A549 (cell line): ENCODE measurements at regions of chr16 and their contacts with region 1.

Region 1: GRCh38 chr16:87062569-87063442 is 254.4 kb downstream of the C16orf95 start:
- DNase-seq: peak; percentile 70 to 91
- ATAC-seq: peak; percentile 92 to 98
- H3K4me3 ChIP-seq: peak overlapping the region; percentile 30; the same call in 2 of the 3 replicates
- H3K27ac ChIP-seq: peak overlapping the region; percentile 58 to 69; a peak in 4 of 6 replicates
- H3K4me1 ChIP-seq: peaks cover 4% of the 10 kb centered on the region; the same call in 1 of the 3 replicates
- CTCF ChIP-seq: peak; percentile 84
- EP300 ChIP-seq: no peak
- POLR2A ChIP-seq: no peak
- RAD21 ChIP-seq: peak; percentile 92 to 98

Region 2: DNA sequence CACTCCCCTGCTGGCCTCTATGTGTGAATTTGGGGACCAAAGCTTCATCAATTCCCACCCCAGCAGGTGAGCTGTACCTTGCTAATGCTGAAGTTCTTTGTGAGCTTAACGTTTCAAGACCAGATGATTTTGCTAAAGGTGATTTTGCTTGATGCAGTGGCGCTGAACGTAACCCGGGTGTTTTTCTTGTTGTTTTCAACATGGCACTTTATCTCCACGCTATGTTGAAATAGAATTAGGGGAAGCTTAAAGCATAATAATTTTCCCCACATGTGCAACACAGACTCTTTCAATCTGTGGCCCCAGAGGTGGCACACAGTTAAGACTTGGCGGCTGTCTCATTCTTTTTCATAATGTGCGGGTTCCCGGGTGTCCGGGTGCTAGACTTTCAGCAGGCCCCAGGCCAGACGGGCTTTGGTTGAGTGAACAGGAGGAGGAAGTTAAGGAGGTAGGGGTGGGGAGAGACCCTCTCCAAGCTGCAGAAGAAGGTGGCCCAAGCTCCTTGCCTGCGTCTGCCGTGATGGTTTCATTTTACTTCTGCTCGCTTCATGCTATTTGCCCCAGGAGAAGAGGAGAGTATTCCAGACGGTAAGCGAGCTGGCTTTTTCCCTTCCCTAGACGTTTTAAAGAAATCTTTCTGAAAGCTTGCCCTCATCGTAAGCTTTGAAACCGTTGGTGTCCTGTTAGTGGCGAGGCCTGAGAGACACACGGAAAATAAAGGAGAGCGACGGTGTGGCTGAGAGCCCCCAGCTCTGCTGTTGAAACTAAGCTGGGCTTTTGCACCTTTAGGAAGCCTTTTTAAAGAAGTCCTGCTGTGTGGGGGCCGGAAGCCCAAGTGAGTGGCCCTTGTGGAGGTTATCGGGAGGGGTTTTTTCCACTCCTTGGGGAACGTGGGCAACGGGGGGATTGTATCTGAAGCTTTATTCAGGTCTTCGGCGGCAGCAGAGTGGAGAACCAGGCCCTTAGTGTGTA is 492.0 kb before region 1 on chr16:
- CTCF ChIA-PET with region 1: interaction called, 22 read pairs
- POLR2A ChIA-PET with region 1: no interaction called
- DNase-seq: no peak
- ATAC-seq: no peak
- H3K4me3 ChIP-seq: no peak overlapping the region
- H3K27ac ChIP-seq: no peak overlapping the region
- H3K4me1 ChIP-seq: no peaks in the 10 kb centered on the region
- CTCF ChIP-seq: no peak
- EP300 ChIP-seq: no peak
- POLR2A ChIP-seq: no peak
- RAD21 ChIP-seq: no peak

Region 3: GRCh38 chr16:86824751-86825296 is 238.0 kb before region 1 on chr16:
- CTCF ChIA-PET with region 1: interaction called, 14 read pairs
- POLR2A ChIA-PET with region 1: no interaction called
- DNase-seq: no peak
- ATAC-seq: no peak
- H3K4me3 ChIP-seq: no peak overlapping the region
- H3K27ac ChIP-seq: peak overlapping the region in 1 of 2 experiments; percentile 30; a peak in 1 of 6 replicates
- H3K4me1 ChIP-seq: no peaks in the 10 kb centered on the region
- CTCF ChIP-seq: no peak
- EP300 ChIP-seq: no peak
- POLR2A ChIP-seq: no peak
- RAD21 ChIP-seq: no peak

Region 4: DNA sequence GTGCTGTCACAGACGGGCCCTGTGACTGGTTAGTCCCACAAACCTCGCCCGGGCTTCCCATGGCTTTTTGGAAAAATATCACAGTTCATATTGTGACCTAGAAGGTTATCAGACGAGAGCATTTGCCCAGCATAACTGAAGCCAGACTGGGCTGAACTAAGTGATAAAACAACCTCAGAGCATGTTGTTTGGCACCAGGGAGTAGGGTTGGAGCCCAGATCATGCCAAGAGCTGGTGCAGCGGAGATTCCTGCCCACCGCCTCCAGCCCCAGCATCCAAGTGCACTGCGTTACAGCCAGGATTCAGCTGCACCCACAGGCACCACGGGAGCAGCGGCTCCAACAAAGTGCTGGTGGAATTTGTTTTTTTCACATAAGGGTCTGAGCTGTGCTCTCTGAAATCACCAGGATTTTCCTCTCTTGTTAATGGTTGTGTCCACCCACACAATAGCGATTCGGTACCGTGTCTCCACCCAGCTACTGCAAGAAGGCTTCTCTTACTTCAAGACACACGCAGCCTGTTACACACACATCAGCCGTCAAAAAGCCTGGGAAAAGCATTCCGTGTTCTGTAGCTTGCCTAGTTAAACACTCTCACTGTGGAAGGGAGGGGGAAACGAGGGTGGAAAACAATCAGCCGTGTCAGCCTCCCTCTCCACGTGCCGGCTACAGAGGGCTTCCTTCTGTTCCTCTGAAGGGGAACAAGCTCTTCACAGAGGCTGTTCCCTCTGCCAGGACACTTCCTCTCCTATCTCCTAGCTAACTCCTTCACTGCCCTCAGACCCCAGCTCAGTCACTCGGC is 19.4 kb before region 1 on chr16:
- CTCF ChIA-PET with region 1: interaction called, 82 read pairs
- POLR2A ChIA-PET with region 1: no interaction called
- DNase-seq: no peak
- ATAC-seq: no peak; a peak in 1 of 6 replicates
- H3K4me3 ChIP-seq: no peak overlapping the region
- H3K27ac ChIP-seq: no peak overlapping the region
- H3K4me1 ChIP-seq: no peaks in the 10 kb centered on the region
- CTCF ChIP-seq: no peak
- EP300 ChIP-seq: no peak
- POLR2A ChIP-seq: no peak
- RAD21 ChIP-seq: no peak